Dorsolateral prefrontal cortex (tissue), 120 donors: ENCODE measurements at regions of chr19 and their contacts with region 1.

Region 1: DNA sequence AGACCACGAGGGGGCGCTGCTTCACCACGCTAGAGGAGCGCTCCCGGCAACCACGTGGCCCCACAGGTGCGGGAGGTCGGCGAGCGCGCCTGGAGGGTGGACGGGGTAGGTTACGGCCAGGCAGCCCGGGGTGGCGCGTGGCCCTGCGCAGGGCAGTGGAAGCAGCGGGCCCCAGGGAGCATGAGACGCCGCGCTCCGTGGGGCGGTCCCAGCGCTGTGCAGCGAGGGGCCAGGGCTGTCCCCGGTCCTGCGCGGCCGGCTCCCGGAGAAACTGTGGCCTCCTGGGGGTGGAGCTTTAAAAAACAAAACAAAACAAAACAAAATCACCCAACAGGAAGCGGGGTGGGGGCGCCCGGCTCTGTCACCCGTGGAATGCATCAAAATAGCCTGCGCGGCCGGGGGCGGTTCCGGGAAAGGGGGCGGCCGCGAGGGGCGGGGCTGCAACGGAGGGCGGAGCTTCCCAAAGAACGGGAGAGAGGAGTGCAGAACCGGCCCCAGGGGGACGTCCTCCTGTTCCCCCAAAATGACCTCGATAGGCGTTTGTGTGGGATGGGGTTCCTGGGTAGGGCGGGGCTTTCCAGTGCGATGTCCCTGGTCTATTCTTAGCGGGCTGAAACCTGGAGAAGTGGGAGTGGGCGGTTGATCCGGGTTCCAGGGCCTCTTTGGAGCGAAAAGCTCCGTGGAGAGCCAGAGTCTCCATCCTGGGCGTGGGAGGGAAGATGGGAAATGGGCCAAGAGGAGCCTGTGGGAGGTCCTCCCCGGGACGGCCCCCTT is 27.3 kb downstream of the NUMBL start:
- DNase-seq: peak; percentile 80 to 93 (median 89)
- H3K4me3 ChIP-seq: peak overlapping the region; percentile 59 to 89 (median 76)
- H3K27ac ChIP-seq: peak overlapping the region in 56 of 59 donors; percentile 40 to 93 (median 78)
- H3K27me3 ChIP-seq: no peaks in the 10 kb centered on the region
- CTCF ChIP-seq: peak in 52 of 56 donors; percentile 4 to 99 (median 98)

Region 2: DNA sequence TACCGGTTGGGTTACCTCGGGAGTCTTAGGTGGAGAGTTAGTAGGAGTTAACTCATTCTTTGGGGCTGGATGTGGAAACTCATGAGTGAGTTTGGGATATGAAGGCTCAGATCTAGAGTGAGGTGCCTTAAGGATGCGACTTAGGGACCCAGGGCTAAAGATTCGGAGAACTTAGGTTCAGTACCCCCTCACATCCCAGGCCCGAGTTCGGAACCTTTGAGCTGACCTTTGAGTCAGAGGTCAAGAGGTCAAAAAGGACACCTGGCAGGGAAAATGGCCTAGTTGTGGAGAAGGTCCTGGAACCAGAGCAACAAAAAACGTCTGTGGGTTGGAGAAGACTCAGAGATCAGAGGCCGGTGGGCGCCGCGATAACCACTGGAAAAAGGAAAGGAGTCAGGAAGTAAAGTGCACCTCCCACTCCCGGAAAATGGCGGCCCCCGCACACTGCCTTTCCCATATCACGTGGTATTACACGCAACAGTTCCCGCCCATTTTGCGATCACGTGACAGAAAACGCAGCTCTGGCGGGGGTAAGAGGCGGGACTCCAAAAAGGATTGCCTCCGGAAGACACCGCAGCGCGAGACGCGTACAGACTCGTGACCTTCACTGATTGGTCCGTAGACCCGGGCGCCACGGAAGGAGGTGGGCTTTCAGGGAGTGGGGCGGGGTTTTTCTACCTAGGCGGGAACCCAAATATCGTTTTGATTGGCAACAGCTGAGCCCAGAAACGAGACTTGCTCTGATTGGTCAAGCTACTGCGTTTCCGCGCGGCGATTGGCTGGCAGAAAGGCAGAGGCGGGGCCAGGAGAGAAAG is 87.2 kb after region 1 on chr19 and contains the start of gene ACTMAP:
- intact Hi-C with region 1: loop called in 1 of 2 experiments (anchors 2 kb)
- DNase-seq: peak; percentile 99 to 100 (median 100)
- H3K4me3 ChIP-seq: peak within 1 kb of the TSS; percentile 60 to 99 (median 81)
- H3K27ac ChIP-seq: peak within 1 kb of the TSS; percentile 76 to 98 (median 94)
- H3K27me3 ChIP-seq: no peaks in the 10 kb centered on the region
- CTCF ChIP-seq: peak in 5 of 56 donors; percentile 4 to 23 (median 14)
- total RNA-seq, gene ACTMAP: 1.4 to 15.4 (median 5.6) TPM

Region 3: GRCh38 chr19:40813182-40813958 is 150.3 kb after region 1 on chr19:
- intact Hi-C with region 1: loop called (anchors 2 to 5 kb)
- DNase-seq: no peak
- H3K4me3 ChIP-seq: no peak overlapping the region
- H3K27ac ChIP-seq: peak overlapping the region in 3 of 59 donors; percentile 3 to 41 (median 38)
- H3K27me3 ChIP-seq: no peaks in the 10 kb centered on the region
- CTCF ChIP-seq: no peak

Region 4: GRCh38 chr19:40974633-40975037 is 311.5 kb after region 1 on chr19:
- intact Hi-C with region 1: loop called in 1 of 2 experiments (anchors 10 kb)
- DNase-seq: peak; percentile 22 to 68 (median 54)
- H3K4me3 ChIP-seq: no peak overlapping the region
- H3K27ac ChIP-seq: no peak overlapping the region
- H3K27me3 ChIP-seq: peaks cover 0 to 28% (median 4%) of the 10 kb centered on the region in 45 donors
- CTCF ChIP-seq: peak; percentile 62 to 91 (median 83)

Region 5: GRCh38 chr19:41263850-41264580 is 600.9 kb after region 1 on chr19 and contains the start of gene HNRNPUL1:
- intact Hi-C with region 1: loop called (anchors 5 to 10 kb)
- DNase-seq: peak; percentile 96 to 99 (median 98)
- H3K4me3 ChIP-seq: peak within 1 kb of the TSS; percentile 67 to 100 (median 97)
- H3K27ac ChIP-seq: peak within 1 kb of the TSS; percentile 87 to 100 (median 98)
- H3K27me3 ChIP-seq: no peaks in the 10 kb centered on the region
- CTCF ChIP-seq: peak in 40 of 56 donors; percentile 13 to 54 (median 32)
- total RNA-seq, gene HNRNPUL1: 92.7 to 156 (median 118) TPM